ENCODE measurements at regions of chr11 and their contacts with region 1.

Region 1: DNA sequence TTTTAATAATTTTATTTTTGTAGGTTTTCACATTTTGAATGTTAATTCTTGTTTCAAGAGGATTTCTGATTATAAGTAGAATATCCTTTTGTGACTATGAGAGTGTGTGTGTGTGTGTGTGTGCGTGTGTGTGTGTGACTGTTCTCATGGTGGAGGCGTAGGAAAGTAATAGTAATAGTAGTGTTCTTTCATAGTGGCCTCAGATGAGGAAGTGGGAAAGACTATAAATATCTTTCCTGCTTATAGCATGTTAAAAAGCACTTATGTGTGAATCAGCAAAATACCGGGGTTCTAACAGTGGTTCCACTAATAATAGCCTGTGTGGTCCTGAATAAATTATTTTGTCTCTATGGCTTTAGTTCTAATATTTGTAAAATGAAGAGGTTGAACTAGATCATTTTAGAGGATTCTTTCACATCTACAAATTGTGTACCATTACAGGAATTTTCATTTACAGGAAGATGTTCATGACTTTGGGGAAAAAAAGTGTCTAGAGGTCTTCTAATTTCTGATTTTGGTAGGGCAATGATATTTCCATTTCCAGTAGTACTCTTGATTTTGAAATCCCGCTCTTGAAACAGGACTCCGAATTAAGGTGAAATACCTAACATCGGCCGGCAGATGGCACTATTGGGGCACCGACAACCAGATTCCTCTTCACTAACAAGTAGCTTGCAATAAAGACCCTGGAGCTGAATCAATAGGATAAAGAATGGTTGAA is 29.9 kb upstream of the OR10G7 start:
- DNase-seq: peak; percentile 63
- ATAC-seq: peak; percentile 83
- H3K4me3 ChIP-seq: no peak overlapping the region
- H3K27ac ChIP-seq: peak overlapping the region; percentile 70
- H3K4me1 ChIP-seq: peaks cover 13% of the 10 kb centered on the region
- H3K27me3 ChIP-seq: peaks cover 0 to 2% of the 10 kb centered on the region in 2 experiments; a peak in 1 of 4 replicates
- CTCF ChIP-seq: peak; percentile 72 to 78 (median 75)
- EP300 ChIP-seq: peak; percentile 82 to 90; a peak in 3 of 4 replicates
- POLR2A ChIP-seq: no peak
- RAD21 ChIP-seq: peak; percentile 79

Region 2: DNA sequence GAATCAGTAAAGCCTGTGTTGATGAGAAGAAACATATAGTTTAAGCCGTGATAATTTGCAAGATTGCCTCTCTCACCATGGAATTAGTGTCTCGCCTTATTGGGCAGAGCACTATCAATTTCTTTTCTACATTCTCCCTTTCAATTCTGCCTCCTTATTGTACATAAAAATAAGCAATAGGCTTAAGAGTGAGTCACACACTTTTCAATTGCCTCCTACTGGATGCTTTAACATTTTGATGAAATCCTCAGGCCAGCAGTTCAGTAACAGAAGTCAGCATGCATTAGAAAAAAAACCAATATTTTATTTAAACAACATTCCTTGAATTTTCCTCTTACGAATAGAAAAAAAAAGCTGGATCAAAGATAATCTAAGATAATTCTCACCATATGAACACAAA is 10.4 kb after region 1 on chr11:
- CTCF ChIA-PET with region 1: interaction called, 12 read pairs
- POLR2A ChIA-PET with region 1: no interaction called
- RAD21 ChIA-PET with region 1: interaction called, 5 read pairs
- SMC1A ChIA-PET with region 1: interaction called, 4 read pairs
- in situ Hi-C with region 1: no loop called
- intact Hi-C with region 1: no loop called
- DNase-seq: no peak
- ATAC-seq: no peak
- H3K4me3 ChIP-seq: no peak overlapping the region
- H3K27ac ChIP-seq: no peak overlapping the region
- H3K4me1 ChIP-seq: peaks cover 2% of the 10 kb centered on the region; the same call in 1 of the 2 replicates
- H3K27me3 ChIP-seq: peaks cover 0 to 2% of the 10 kb centered on the region in 2 experiments; a peak in 1 of 4 replicates
- CTCF ChIP-seq: no peak
- EP300 ChIP-seq: no peak
- POLR2A ChIP-seq: no peak
- RAD21 ChIP-seq: no peak

Region 3: DNA sequence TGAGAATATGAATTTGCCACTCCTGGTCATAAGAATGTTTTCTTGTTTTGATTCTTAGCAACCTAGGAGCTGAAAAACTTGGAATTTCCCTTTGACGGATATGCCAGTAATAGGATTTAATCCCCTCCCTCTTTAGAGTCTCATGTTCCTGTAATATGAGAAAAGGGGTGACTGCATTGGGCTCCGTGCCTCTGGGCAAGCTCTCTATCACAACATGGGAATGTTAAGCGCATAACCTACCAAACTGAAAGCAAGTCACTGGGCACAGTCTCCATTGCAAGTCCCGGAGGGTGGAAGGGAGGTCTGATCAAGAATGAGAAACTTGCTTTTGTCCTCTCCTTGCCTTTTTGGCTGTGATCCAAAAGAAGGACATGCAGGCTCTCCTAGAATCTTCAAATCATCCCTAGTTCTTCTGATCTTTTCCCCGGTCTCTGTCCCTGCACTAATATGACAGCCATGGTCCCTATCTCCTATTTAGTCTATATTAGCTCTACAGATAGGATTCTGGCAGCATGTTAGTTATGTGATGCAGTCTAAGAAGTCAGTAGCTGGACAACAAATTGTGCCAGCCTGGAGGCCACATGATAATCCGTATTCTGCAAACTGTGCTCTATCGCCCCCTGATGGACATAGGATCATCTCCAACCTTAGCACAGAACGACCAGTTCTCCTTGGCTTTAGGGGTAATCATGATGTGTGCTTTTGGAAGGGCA is 123.8 kb after region 1 on chr11:
- CTCF ChIA-PET with region 1: interaction called, 89 read pairs
- POLR2A ChIA-PET with region 1: interaction called, 4 read pairs
- RAD21 ChIA-PET with region 1: interaction called, 28 read pairs
- SMC1A ChIA-PET with region 1: interaction called, 23 read pairs
- in situ Hi-C with region 1: loop called (anchors 5 kb)
- intact Hi-C with region 1: loop called (anchors 1 kb)
- DNase-seq: peak; percentile 9
- ATAC-seq: peak; percentile 95
- H3K4me3 ChIP-seq: no peak overlapping the region
- H3K27ac ChIP-seq: no peak overlapping the region
- H3K4me1 ChIP-seq: no peaks in the 10 kb centered on the region
- H3K27me3 ChIP-seq: no peaks in the 10 kb centered on the region
- CTCF ChIP-seq: peak; percentile 68 to 87 (median 73)
- EP300 ChIP-seq: no peak
- POLR2A ChIP-seq: no peak
- RAD21 ChIP-seq: peak; percentile 70

Region 4: DNA sequence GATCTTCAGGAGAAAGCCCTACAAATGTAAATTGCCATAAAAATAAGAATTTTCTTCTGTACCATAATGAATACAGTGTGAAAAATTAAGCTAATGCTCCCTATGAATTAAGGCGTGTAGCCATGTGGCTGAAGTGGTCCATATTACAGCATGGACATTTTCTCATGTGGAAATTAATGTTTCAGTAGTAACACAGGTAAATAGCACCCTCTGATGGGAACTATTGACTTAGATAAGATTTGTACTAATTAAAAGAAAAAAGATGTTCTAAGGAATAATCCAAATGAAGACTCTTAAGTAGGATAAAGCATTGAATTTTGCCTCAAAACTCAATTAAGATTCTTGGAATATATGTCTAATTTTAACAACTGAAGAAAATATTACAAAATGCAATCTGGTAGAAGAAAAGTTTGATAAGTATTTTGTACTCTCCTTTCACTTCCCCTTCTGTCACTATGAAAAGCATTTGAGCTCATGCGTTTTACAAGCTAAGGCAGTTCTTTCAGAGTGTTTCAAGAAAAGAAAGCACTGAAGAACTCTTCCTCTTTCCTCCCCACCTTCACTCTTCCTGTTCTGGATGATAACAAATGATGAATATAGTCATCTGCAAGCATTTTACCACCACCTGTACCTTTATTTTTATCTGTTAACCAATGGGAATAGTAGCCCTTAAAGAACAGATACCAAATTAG is 258.9 kb after region 1 on chr11:
- CTCF ChIA-PET with region 1: interaction called, 8 read pairs
- POLR2A ChIA-PET with region 1: no interaction called
- RAD21 ChIA-PET with region 1: interaction called, 5 read pairs
- SMC1A ChIA-PET with region 1: interaction called, 3 read pairs
- in situ Hi-C with region 1: no loop called
- intact Hi-C with region 1: loop called (anchors 2 kb)
- DNase-seq: peak; percentile 27
- ATAC-seq: peak; percentile 98
- H3K4me3 ChIP-seq: no peak overlapping the region
- H3K27ac ChIP-seq: no peak overlapping the region
- H3K4me1 ChIP-seq: peaks cover 8% of the 10 kb centered on the region
- H3K27me3 ChIP-seq: peaks cover 0 to 3% of the 10 kb centered on the region in 2 experiments; a peak in 1 of 4 replicates
- CTCF ChIP-seq: no peak
- EP300 ChIP-seq: peak in 1 of 2 experiments; percentile 49; a peak in 1 of 4 replicates
- POLR2A ChIP-seq: no peak
- RAD21 ChIP-seq: no peak

Region 5: DNA sequence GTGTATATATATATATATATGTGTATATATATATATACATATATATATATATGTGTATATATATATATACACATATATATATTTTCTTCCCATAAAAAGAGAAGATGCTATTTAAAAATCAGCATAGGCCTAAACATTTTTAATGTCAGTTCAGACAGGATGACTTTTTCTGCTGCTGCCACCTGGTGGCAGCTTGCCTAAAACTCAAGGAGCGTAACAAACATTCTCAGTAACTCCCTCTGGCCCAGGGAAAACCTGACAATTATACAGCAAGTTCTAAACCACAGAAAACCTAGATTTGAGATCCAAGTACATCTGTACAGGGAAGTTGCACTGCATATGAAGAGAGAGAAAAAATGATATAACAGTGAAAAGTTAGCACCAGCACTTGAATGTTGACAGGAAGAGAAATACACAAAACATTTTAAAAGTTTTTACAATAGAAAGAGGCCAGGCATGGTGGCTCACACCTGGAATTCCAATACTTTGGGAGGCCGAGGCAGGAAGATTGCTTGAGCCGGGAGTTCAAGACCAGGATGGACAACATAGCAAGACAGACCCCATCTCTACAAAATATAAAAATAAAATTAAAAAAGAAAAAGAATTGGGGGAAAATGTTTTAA is 515.3 kb after region 1 on chr11:
- CTCF ChIA-PET with region 1: interaction called, 7 read pairs
- POLR2A ChIA-PET with region 1: no interaction called
- RAD21 ChIA-PET with region 1: interaction called, 3 read pairs
- SMC1A ChIA-PET with region 1: interaction called, 6 read pairs
- in situ Hi-C with region 1: loop called (anchors 10 kb)
- intact Hi-C with region 1: loop called (anchors 1 kb)
- DNase-seq: no peak
- ATAC-seq: peak; percentile 72
- H3K4me3 ChIP-seq: no peak overlapping the region
- H3K27ac ChIP-seq: no peak overlapping the region
- H3K4me1 ChIP-seq: no peaks in the 10 kb centered on the region
- H3K27me3 ChIP-seq: no peaks in the 10 kb centered on the region; a peak in 1 of 4 replicates
- CTCF ChIP-seq: peak; percentile 57 to 67 (median 66)
- EP300 ChIP-seq: no peak
- POLR2A ChIP-seq: no peak
- RAD21 ChIP-seq: peak; percentile 58

Measured in GM12878 (cell line).